GM12878 (cell line): ENCODE measurements at regions of chr7 and their contacts with region 1.

Region 1: GRCh38 chr7:47945261-47946001 is 2.8 kb downstream of the PKD1L1 start:
- DNase-seq: no peak
- ATAC-seq: peak; percentile 88
- H3K4me3 ChIP-seq: no peak overlapping the region
- H3K27ac ChIP-seq: no peak overlapping the region
- H3K4me1 ChIP-seq: no peaks in the 10 kb centered on the region
- H3K27me3 ChIP-seq: no peaks in the 10 kb centered on the region; a peak in 1 of 4 replicates
- CTCF ChIP-seq: peak; percentile 66 to 80 (median 78)
- EP300 ChIP-seq: no peak
- POLR2A ChIP-seq: no peak
- RAD21 ChIP-seq: peak; percentile 93

Region 2: DNA sequence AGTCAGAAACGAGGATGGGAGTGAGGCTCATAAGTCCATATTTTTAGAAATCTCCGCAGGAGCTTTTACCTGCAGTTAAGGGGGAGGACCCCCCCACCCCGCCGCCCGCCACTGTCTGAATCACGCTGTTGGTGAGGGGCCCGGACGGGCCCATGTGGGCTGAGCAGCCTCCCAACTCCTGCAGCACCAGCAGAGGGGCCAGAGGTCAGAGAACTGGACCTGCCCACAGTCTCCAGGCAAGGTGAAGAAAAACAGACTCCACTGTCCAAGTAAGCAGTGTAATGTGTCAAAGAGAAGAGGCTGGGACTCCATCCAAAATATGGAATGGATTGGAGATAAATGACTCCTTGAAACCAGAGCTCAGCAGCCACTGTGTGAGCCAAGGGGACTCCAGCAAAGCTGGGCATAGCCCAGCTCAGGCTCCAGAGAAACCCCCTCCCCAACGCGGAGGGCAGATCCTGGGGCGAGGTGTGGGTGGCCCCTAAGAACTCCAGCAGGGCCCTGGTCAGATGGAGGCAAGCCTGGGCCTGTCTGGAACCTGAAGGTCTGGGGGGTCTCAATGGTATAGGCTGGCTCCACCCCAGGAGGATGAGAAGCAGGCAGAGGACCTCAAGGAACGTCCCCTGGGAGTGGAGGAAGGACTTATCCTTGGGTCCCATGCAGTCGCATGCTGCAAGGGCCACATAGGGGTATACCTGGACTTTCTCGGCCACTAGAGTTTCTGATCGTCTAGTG is 235.1 kb before region 1 on chr7:
- CTCF ChIA-PET with region 1: no interaction called
- POLR2A ChIA-PET with region 1: no interaction called
- RAD21 ChIA-PET with region 1: no interaction called
- SMC1A ChIA-PET with region 1: no interaction called
- in situ Hi-C with region 1: no loop called
- intact Hi-C with region 1: no loop called
- DNase-seq: no peak
- ATAC-seq: no peak
- H3K4me3 ChIP-seq: no peak overlapping the region
- H3K27ac ChIP-seq: no peak overlapping the region
- H3K4me1 ChIP-seq: peaks cover 10% of the 10 kb centered on the region
- H3K27me3 ChIP-seq: no peaks in the 10 kb centered on the region
- CTCF ChIP-seq: no peak
- EP300 ChIP-seq: no peak
- POLR2A ChIP-seq: no peak
- RAD21 ChIP-seq: no peak

Region 3: DNA sequence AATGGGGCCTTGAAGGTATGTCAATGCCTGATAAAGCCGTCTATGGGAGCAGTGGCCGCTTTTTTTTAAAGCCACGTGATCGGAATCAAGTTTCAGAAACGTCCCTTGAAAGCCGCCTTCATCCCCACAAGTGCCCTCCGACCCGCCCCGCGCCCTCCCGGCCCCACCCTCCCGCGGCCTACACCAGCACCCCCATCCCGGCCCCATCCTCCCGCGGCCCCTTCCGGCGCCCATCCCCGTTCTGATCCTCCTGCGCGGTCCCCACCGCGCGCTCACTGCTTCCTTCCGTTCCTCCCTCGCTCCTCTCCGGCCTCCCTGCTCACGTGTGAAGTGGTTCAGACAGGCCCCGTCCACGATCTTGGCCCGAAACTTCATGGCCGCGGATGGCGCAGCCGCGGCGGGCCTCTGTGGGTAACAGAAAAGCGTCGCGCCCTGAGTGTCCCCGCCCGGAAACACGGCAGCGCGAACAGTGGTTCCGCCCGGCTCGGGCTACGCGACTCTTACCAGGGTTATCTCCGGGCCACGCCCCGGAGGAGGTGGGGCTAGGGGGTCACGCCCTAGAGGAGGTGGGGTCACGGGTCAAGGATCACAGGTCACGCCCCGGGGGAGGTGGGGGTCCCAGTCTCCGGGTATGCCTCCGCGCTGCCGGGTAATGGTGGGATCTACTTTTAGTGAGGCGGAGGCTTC is 33.9 kb after region 1 on chr7 and contains the start of gene HUS1:
- CTCF ChIA-PET with region 1: interaction called, 23 read pairs
- POLR2A ChIA-PET with region 1: no interaction called
- RAD21 ChIA-PET with region 1: interaction called, 10 read pairs
- SMC1A ChIA-PET with region 1: interaction called, 4 read pairs
- in situ Hi-C with region 1: no loop called
- intact Hi-C with region 1: no loop called
- DNase-seq: peak; percentile 68
- ATAC-seq: peak; percentile 99
- H3K4me3 ChIP-seq: peak within 1 kb of the TSS; percentile 73
- H3K27ac ChIP-seq: peak within 1 kb of the TSS; percentile 82
- H3K4me1 ChIP-seq: peaks cover 4% of the 10 kb centered on the region; the same call in 1 of the 2 replicates
- H3K27me3 ChIP-seq: no peaks in the 10 kb centered on the region
- CTCF ChIP-seq: no peak
- EP300 ChIP-seq: no peak
- POLR2A ChIP-seq: peak; percentile 98
- RAD21 ChIP-seq: no peak
- polyA plus RNA-seq, gene HUS1: 26.4 to 35.5 TPM

Region 4: DNA sequence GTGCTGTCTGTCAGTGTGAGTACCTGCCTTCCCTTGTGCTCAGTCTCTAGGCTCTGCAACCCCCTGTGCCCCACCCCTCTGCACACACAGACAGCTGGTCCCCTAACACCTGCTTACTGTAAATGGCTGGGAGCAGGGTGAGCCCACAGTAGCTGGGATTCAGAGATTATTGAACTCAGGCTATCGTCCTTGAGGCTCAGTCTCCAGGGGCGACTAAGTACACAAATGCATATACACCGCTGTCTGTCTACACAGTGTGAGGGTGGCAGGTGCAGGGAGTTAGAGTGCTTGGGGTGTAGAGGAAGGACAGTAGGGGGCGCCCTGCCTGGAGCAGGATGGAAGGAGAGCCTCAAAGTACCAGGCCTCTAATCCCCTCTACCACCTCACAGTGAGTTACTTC is 156.5 kb after region 1 on chr7:
- CTCF ChIA-PET with region 1: interaction called, 5 read pairs
- POLR2A ChIA-PET with region 1: no interaction called
- RAD21 ChIA-PET with region 1: interaction called, 11 read pairs
- SMC1A ChIA-PET with region 1: interaction called, 4 read pairs
- in situ Hi-C with region 1: no loop called
- intact Hi-C with region 1: no loop called
- DNase-seq: no peak
- ATAC-seq: peak; percentile 41
- H3K4me3 ChIP-seq: no peak overlapping the region
- H3K27ac ChIP-seq: no peak overlapping the region
- H3K4me1 ChIP-seq: no peaks in the 10 kb centered on the region
- H3K27me3 ChIP-seq: no peaks in the 10 kb centered on the region
- CTCF ChIP-seq: peak in 2 of 3 experiments; percentile 6 to 37; a peak in 2 of 6 replicates
- EP300 ChIP-seq: no peak
- POLR2A ChIP-seq: no peak
- RAD21 ChIP-seq: no peak

Region 5: DNA sequence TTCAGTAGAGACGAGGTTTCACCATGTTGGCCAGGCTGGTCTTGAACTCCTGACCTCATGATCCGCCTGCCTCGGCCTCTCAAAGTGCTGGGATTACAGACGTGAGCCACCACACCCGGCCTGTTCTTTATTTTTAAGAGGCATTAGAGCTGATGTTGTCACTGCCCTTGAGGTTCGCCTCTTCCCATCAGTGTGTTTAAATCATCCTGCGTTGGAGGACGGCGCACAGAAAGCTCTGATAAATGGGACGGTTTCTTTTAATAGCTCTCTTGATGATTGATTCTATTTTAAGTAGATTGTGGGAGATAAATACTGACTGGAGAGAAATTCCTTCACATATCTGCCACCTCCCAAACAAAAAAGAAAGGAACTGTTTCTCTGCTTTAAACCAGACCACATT is 172.6 kb after region 1 on chr7:
- CTCF ChIA-PET with region 1: interaction called, 15 read pairs
- POLR2A ChIA-PET with region 1: no interaction called
- RAD21 ChIA-PET with region 1: interaction called, 5 read pairs
- SMC1A ChIA-PET with region 1: no interaction called
- in situ Hi-C with region 1: loop called (anchors 5 kb)
- intact Hi-C with region 1: no loop called
- DNase-seq: no peak
- ATAC-seq: no peak
- H3K4me3 ChIP-seq: no peak overlapping the region
- H3K27ac ChIP-seq: no peak overlapping the region
- H3K4me1 ChIP-seq: no peaks in the 10 kb centered on the region
- H3K27me3 ChIP-seq: no peaks in the 10 kb centered on the region; a peak in 1 of 4 replicates
- CTCF ChIP-seq: no peak
- EP300 ChIP-seq: no peak
- POLR2A ChIP-seq: no peak
- RAD21 ChIP-seq: no peak

Region 6: GRCh38 chr7:49773218-49773935 is 1827.9 kb after region 1 on chr7 and contains the start of gene VWC2:
- CTCF ChIA-PET with region 1: no interaction called
- POLR2A ChIA-PET with region 1: no interaction called
- RAD21 ChIA-PET with region 1: no interaction called
- SMC1A ChIA-PET with region 1: no interaction called
- in situ Hi-C with region 1: loop called (anchors 25 kb)
- intact Hi-C with region 1: no loop called
- DNase-seq: no peak
- ATAC-seq: no peak
- H3K4me3 ChIP-seq: no peak within 1 kb of the TSS; the same call in 1 of the 2 replicates
- H3K27ac ChIP-seq: no peak within 1 kb of the TSS
- H3K4me1 ChIP-seq: peaks cover 19% of the 10 kb centered on the region
- H3K27me3 ChIP-seq: peaks cover 13 to 33% of the 10 kb centered on the region in 2 experiments
- CTCF ChIP-seq: no peak
- EP300 ChIP-seq: no peak
- POLR2A ChIP-seq: no peak
- RAD21 ChIP-seq: no peak
- polyA plus RNA-seq, gene VWC2: not detected